ENCODE measurements at regions of chr16 and their contacts with region 1.

Region 1: DNA sequence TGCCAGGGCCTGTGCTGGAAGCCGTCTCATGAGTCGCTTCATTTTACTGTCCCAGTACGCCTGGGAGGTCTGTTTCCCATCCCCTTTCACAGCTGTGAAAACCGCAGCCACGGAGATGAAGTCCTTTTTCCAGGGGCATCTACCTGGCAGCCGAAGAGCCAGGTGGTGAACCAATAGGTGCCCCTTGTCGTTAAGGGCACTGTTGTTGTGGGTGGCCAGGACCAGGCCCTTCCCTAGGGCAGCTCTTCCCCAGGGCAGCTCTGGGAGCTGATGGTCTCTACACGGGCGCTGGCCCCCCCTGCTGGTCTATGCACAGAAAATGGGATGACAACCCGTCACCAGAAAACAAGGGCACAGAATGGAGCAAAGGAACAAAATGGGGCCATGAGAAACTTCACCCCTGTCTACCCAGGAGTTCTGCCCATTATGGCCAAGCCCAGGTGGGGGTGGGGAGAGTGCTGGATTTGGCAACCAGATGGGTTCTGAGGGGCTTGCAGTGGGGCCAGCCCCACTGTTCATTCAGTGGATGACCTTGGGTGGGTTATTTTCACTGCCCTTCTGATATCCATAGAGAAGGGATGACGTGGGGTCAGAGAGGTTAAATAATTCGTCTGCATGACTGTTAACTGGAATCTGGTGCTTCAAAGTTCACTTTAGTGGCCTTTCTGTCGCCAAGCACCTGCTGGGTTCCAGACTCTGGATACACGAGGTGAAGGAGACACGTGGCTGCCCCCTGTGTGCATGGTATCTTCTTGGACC is 11.5 kb downstream of the RMI2 start:
- DNase-seq: peak; percentile 81
- ATAC-seq: peak; percentile 93
- H3K4me3 ChIP-seq: no peak overlapping the region
- H3K27ac ChIP-seq: no peak overlapping the region
- H3K4me1 ChIP-seq: peaks cover 62% of the 10 kb centered on the region
- H3K27me3 ChIP-seq: no peaks in the 10 kb centered on the region
- CTCF ChIP-seq: peak; percentile 99
- EP300 ChIP-seq: no peak
- POLR2A ChIP-seq: no peak
- RAD21 ChIP-seq: peak; percentile 99

Region 2: GRCh38 chr16:10964039-10964890 is 392.5 kb before region 1 on chr16:
- CTCF ChIA-PET with region 1: interaction called, 27 read pairs
- POLR2A ChIA-PET with region 1: no interaction called
- in situ Hi-C with region 1: loop called (anchors 10 kb)
- intact Hi-C with region 1: no loop called
- DNase-seq: peak; percentile 74
- ATAC-seq: peak; percentile 96
- H3K4me3 ChIP-seq: no peak overlapping the region
- H3K27ac ChIP-seq: no peak overlapping the region
- H3K4me1 ChIP-seq: peaks cover 14% of the 10 kb centered on the region
- H3K27me3 ChIP-seq: no peaks in the 10 kb centered on the region
- CTCF ChIP-seq: peak; percentile 99
- EP300 ChIP-seq: peak in 1 of 2 experiments; percentile 52; a peak in 1 of 4 replicates
- POLR2A ChIP-seq: no peak
- RAD21 ChIP-seq: peak; percentile 97

Region 3: GRCh38 chr16:10971560-10971961 is 385.2 kb before region 1 on chr16:
- CTCF ChIA-PET with region 1: interaction called, 27 read pairs
- POLR2A ChIA-PET with region 1: interaction called, 3 read pairs
- in situ Hi-C with region 1: loop called (anchors 10 kb)
- intact Hi-C with region 1: loop called (anchors 1 kb)
- DNase-seq: peak; percentile 70
- ATAC-seq: peak; percentile 70
- H3K4me3 ChIP-seq: no peak overlapping the region
- H3K27ac ChIP-seq: no peak overlapping the region
- H3K4me1 ChIP-seq: peaks cover 9% of the 10 kb centered on the region
- H3K27me3 ChIP-seq: no peaks in the 10 kb centered on the region; a peak in 1 of 5 replicates
- CTCF ChIP-seq: peak; percentile 88
- EP300 ChIP-seq: no peak
- POLR2A ChIP-seq: no peak
- RAD21 ChIP-seq: peak; percentile 85

Region 4: GRCh38 chr16:11105038-11105903 is 251.5 kb before region 1 on chr16:
- CTCF ChIA-PET with region 1: no interaction called
- POLR2A ChIA-PET with region 1: no interaction called
- in situ Hi-C with region 1: no loop called
- intact Hi-C with region 1: loop called (anchors 2 kb)
- DNase-seq: peak; percentile 90
- ATAC-seq: peak; percentile 78
- H3K4me3 ChIP-seq: no peak overlapping the region
- H3K27ac ChIP-seq: no peak overlapping the region
- H3K4me1 ChIP-seq: peaks cover 45% of the 10 kb centered on the region
- H3K27me3 ChIP-seq: no peaks in the 10 kb centered on the region
- CTCF ChIP-seq: no peak
- EP300 ChIP-seq: 0 out of 4 replicates have a peak, but pooled peaks of 1 of the 2 experiments have one; percentile 13
- POLR2A ChIP-seq: no peak
- RAD21 ChIP-seq: no peak

Region 5: GRCh38 chr16:11407047-11407982 is 50.6 kb after region 1 on chr16:
- CTCF ChIA-PET with region 1: no interaction called
- POLR2A ChIA-PET with region 1: no interaction called
- in situ Hi-C with region 1: no loop called
- intact Hi-C with region 1: no loop called
- DNase-seq: peak; percentile 78
- ATAC-seq: peak; percentile 54
- H3K4me3 ChIP-seq: no peak overlapping the region
- H3K27ac ChIP-seq: no peak overlapping the region
- H3K4me1 ChIP-seq: peaks cover 11% of the 10 kb centered on the region
- H3K27me3 ChIP-seq: peaks cover 17 to 29% of the 10 kb centered on the region in 2 experiments; a peak in 4 of 5 replicates
- CTCF ChIP-seq: peak; percentile 96
- EP300 ChIP-seq: no peak
- POLR2A ChIP-seq: no peak
- RAD21 ChIP-seq: peak; percentile 91

Region 6: DNA sequence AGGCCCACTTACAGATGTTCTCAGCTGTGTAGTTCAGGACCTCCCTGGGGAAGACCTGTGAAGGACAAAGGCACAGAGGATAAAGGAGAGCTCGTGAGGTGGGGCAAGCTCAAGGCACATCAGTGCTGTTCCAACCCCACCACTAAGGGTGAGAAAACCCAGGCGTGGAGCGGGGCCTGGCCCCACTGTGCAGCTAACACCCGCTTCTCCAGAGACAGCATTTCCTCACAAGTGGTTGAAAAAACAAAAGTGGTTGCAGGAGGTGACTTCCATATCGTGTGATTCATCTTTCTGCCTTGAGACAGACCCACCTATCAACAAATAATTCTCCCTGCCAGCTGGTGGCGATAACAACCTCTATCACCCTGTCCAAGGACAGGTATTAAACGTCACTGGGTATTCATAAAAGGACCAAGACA is 341.5 kb after region 1 on chr16:
- CTCF ChIA-PET with region 1: no interaction called
- POLR2A ChIA-PET with region 1: no interaction called
- in situ Hi-C with region 1: no loop called
- intact Hi-C with region 1: no loop called
- DNase-seq: no peak
- ATAC-seq: peak; percentile 10
- H3K4me3 ChIP-seq: no peak overlapping the region
- H3K27ac ChIP-seq: no peak overlapping the region
- H3K4me1 ChIP-seq: peaks cover 18% of the 10 kb centered on the region
- H3K27me3 ChIP-seq: no peaks in the 10 kb centered on the region
- CTCF ChIP-seq: peak; percentile 35
- EP300 ChIP-seq: no peak
- POLR2A ChIP-seq: no peak
- RAD21 ChIP-seq: no peak